ENCODE measurements at regions of chr15 and their contacts with region 1.

Region 1: GRCh38 chr15:101718896-101719295 is 5.4 kb downstream of the TARS3 start:
- DNase-seq: no peak
- H3K4me3 ChIP-seq: no peak overlapping the region
- H3K4me3 Mint-ChIP-seq: peak overlapping the region in 1 of 7 donors; percentile 15
- H3K27ac ChIP-seq: no peak overlapping the region
- H3K27ac Mint-ChIP-seq: peak overlapping the region in 2 of 8 donors; percentile 5 to 35
- H3K4me1 ChIP-seq: peaks cover 16% of the 10 kb centered on the region
- H3K4me1 Mint-ChIP-seq: peaks cover 41 to 59% (median 53%) of the 10 kb centered on the region in 3 donors
- H3K27me3 ChIP-seq: no peaks in the 10 kb centered on the region
- H3K27me3 Mint-ChIP-seq: no peaks in the 10 kb centered on the region

Region 2: DNA sequence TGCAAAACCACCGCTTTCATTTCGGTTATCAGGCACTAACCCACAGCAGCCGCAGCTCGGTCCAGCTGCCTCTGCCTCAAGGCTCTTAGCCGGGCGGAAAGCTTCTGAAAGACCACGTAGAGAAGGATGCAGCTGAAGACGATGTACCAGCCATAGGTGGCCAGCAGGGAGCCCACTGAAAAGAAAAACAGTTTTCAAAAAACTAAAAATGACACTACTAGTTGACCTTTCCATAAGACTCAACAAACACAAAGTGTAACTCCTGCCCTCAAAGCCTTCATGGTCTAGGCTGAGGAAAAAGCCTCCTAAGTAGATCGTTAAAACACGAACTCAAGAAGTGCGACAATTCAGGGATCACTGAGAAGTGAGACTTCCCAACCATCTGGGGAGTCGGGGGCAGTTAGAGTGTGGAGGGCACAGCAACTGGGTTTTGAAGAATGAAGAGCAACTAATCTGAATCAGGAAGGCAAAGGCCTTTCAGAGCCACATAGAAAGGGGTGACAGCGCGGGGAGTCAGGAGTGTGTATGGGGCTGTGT is 442.3 kb before region 1 on chr15:
- CTCF ChIA-PET with region 1: no interaction called
- POLR2A ChIA-PET with region 1: interaction called, 13 read pairs
- DNase-seq: peak in 2 of 5 donors; percentile 17 to 29
- H3K4me3 ChIP-seq: peak overlapping the region; percentile 88
- H3K4me3 Mint-ChIP-seq: peak overlapping the region; percentile 90 to 100 (median 96)
- H3K27ac ChIP-seq: peak overlapping the region; percentile 87
- H3K27ac Mint-ChIP-seq: peak overlapping the region; percentile 80 to 100 (median 94)
- H3K4me1 ChIP-seq: peaks cover 18% of the 10 kb centered on the region
- H3K4me1 Mint-ChIP-seq: peaks cover 26 to 37% (median 31%) of the 10 kb centered on the region in 3 donors
- H3K27me3 ChIP-seq: no peaks in the 10 kb centered on the region
- H3K27me3 Mint-ChIP-seq: no peaks in the 10 kb centered on the region

Region 3: GRCh38 chr15:101852356-101852755 is 133.5 kb after region 1 on chr15:
- CTCF ChIA-PET with region 1: no interaction called
- POLR2A ChIA-PET with region 1: no interaction called
- DNase-seq: no peak
- H3K4me3 ChIP-seq: no peak overlapping the region
- H3K4me3 Mint-ChIP-seq: no peak overlapping the region
- H3K27ac ChIP-seq: no peak overlapping the region
- H3K27ac Mint-ChIP-seq: no peak overlapping the region
- H3K4me1 ChIP-seq: no peaks in the 10 kb centered on the region
- H3K4me1 Mint-ChIP-seq: no peaks in the 10 kb centered on the region
- H3K27me3 ChIP-seq: no peaks in the 10 kb centered on the region
- H3K27me3 Mint-ChIP-seq: peaks cover 10 to 58% of the 10 kb centered on the region in 2 donors